K562 (cell line): ENCODE measurements at regions of chr3 and their contacts with region 1.

Region 1: GRCh38 chr3:123907720-123908119 is 23.6 kb upstream of the MYLK start:
- DNase-seq: no peak
- ATAC-seq: no peak
- H3K4me3 ChIP-seq: no peak overlapping the region
- H3K27ac ChIP-seq: no peak overlapping the region
- H3K4me1 ChIP-seq: no peaks in the 10 kb centered on the region
- H3K27me3 ChIP-seq: no peaks in the 10 kb centered on the region
- CTCF ChIP-seq: peak in 1 of 3 experiments; percentile 26; a peak in 2 of 6 replicates
- EP300 ChIP-seq: no peak
- POLR2A ChIP-seq: no peak
- RAD21 ChIP-seq: no peak

Region 2: DNA sequence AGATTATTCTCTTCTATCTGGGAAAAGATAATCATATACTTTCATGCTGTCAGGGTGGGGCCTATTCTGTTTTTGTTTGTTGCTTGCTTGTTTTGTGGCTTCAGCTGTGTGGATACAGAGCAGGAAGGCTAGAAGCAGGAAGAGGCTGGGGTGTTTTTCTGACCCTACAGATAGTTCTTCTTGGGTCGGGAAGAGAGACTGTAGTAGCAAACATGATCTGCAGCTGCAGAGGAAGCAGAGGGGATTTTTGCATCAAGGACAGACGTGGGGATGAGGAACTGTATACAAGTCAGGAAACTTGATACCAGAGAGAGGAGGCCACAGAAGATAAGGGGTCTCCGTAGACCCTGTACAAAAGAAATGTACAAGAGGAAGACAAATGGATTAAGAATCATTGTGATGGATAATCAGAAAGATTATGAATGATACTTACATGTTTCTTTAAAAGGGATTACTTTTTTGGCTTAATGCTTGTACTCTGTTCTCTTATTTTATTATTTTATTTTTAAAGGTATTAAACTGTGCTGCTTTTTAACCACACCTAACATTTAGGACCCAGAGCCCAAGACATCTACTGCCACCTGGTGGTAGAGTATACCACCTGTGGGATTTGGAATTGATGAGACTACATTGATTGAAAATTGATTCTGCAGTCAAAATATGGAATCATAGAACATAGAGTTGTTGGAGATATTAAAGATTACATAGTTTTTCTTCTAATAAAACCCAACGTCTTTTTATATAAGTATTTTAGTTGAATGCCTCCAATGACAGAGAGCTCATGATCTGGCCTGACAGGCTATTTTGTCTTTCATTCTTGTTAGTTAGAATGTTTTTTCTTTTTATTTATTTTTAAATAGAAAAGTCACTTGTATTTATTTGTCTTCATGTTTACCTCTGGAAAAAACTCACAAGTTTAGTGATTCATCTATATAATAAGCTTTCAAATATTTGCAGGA is 171.5 kb after region 1 on chr3:
- CTCF ChIA-PET with region 1: no interaction called
- POLR2A ChIA-PET with region 1: no interaction called
- in situ Hi-C with region 1: no loop called
- intact Hi-C with region 1: loop called (anchors 10 kb)
- DNase-seq: peak; percentile 17 to 40 (median 33)
- ATAC-seq: peak; percentile 55; the same call in 1 of the 3 replicates
- H3K4me3 ChIP-seq: no peak overlapping the region
- H3K27ac ChIP-seq: no peak overlapping the region
- H3K4me1 ChIP-seq: no peaks in the 10 kb centered on the region
- H3K27me3 ChIP-seq: peaks cover 0 to 12% of the 10 kb centered on the region in 2 experiments; a peak in 2 of 5 replicates
- CTCF ChIP-seq: peak; percentile 40 to 69 (median 47); a peak in 3 of 6 replicates
- EP300 ChIP-seq: no peak
- POLR2A ChIP-seq: no peak
- RAD21 ChIP-seq: peak; percentile 61 to 75